ENCODE measurements at regions of chr19 and their contacts with region 1.

Region 1: GRCh38 chr19:41123716-41124294 is 9.6 kb downstream of the CYP2F1 start:
- DNase-seq: no peak
- ATAC-seq: no peak
- H3K4me3 ChIP-seq: no peak overlapping the region
- H3K4me3 Mint-ChIP-seq: no peak overlapping the region
- H3K27ac ChIP-seq: no peak overlapping the region
- H3K27ac Mint-ChIP-seq: peak overlapping the region; percentile 9 to 95 (median 88)
- H3K4me1 ChIP-seq: peaks cover 26 to 31% of the 10 kb centered on the region in 2 donors
- H3K4me1 Mint-ChIP-seq: peaks cover 21 to 49% (median 44%) of the 10 kb centered on the region in 7 donors
- H3K27me3 ChIP-seq: no peaks in the 10 kb centered on the region
- H3K27me3 Mint-ChIP-seq: peaks cover 0 to 14% (median 0%) of the 10 kb centered on the region in 5 donors

Region 2: DNA sequence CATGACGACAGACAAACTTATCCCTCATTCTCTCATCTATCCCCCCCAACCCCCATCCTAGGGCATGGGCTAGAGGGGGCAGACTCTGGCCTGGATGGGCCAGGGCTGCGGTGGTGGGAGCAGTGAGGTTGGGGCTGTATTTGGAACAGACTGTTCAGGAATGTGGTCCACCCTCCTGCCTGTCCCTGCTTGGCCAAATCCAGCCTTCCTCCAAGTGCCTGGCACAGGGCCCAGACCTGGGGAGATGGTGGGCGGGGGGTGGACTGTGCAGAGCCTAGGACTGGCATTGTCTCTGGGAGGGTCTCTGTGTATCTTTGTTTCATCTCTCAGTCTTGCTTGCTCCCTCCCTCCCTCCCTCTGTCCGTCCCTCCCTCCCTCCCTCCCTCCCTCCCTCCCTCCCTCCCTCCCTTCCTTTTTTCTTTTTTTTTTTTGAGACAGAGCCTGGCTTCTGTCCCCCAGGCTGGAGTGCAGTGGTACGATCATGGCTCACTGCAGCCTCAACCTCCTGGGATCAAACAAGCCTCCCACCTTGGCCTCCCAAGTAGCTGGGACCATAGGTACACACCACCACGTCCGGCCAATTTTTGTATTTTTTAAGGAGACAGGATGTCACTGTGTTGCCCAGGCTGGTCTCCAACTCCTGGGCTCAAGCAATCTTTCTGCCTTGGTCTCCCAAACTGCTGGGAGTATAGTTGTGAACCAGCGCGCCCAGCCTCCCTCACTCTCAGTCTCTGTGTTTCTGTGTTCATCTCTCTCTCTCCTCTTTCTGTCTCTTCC is 310.4 kb before region 1 on chr19:
- CTCF ChIA-PET with region 1: no interaction called
- POLR2A ChIA-PET with region 1: no interaction called
- intact Hi-C with region 1: loop called in 1 of 2 experiments (anchors 5 kb)
- DNase-seq: no peak
- ATAC-seq: no peak
- H3K4me3 ChIP-seq: no peak overlapping the region
- H3K4me3 Mint-ChIP-seq: peak overlapping the region in 9 of 10 donors; percentile 9 to 100 (median 91)
- H3K27ac ChIP-seq: no peak overlapping the region
- H3K27ac Mint-ChIP-seq: peak overlapping the region in 5 of 9 donors; percentile 13 to 90 (median 86)
- H3K4me1 ChIP-seq: peaks cover 8 to 20% of the 10 kb centered on the region in 2 donors
- H3K4me1 Mint-ChIP-seq: peaks cover 33 to 55% (median 52%) of the 10 kb centered on the region in 7 donors
- H3K27me3 ChIP-seq: no peaks in the 10 kb centered on the region
- H3K27me3 Mint-ChIP-seq: peaks cover 0 to 42% (median 0%) of the 10 kb centered on the region in 5 donors

Region 3: DNA sequence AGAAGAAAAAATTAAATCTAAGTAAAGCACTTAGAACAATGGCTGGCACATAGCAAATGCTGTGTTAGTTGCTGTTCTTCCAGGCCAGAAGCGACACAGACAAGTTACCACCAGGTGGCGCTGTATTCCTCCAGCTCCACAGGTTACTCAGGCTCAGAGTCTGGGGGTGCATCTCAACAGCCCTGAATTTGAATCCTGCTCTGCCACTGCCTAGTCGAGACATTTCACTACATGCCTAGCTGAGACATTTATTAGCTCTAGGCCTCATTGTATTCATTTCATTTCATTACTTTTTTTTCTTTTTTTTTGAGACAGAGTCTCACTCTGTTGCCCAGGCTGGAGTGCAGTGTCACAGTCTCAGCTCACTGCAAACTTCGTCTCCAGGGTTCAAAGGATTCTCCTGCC is 149.2 kb before region 1 on chr19:
- CTCF ChIA-PET with region 1: interaction called, 5 read pairs
- POLR2A ChIA-PET with region 1: interaction called, 3 read pairs
- intact Hi-C with region 1: loop called (anchors 2 to 5 kb)
- DNase-seq: peak; percentile 54 to 84 (median 76)
- ATAC-seq: peak; percentile 87
- H3K4me3 ChIP-seq: no peak overlapping the region
- H3K4me3 Mint-ChIP-seq: peak overlapping the region in 1 of 10 donors; percentile 45
- H3K27ac ChIP-seq: no peak overlapping the region
- H3K27ac Mint-ChIP-seq: peak overlapping the region in 3 of 9 donors; percentile 53 to 74 (median 63)
- H3K4me1 ChIP-seq: peaks cover 16 to 19% of the 10 kb centered on the region in 2 donors
- H3K4me1 Mint-ChIP-seq: peaks cover 13 to 53% (median 27%) of the 10 kb centered on the region in 7 donors
- H3K27me3 ChIP-seq: no peaks in the 10 kb centered on the region
- H3K27me3 Mint-ChIP-seq: peaks cover 2 to 38% (median 3%) of the 10 kb centered on the region in 5 donors

Region 4: DNA sequence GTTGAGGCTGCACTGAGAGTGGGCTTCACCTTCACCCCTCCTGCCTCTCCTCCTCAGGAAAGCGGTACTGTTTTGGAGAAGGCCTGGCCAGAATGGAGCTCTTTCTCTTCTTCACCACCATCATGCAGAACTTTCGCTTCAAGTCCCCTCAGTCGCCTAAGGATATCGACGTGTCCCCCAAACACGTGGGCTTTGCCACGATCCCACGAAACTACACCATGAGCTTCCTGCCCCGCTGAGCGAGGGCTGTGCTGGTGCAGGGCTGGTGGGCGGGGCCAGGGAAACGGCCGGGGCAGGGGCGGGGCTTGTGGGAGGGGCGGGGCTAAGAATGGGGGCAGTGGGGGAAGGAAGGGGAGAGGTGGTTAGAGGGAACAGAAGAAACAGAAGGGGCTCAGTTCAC is 28.1 kb before region 1 on chr19:
- CTCF ChIA-PET with region 1: no interaction called
- POLR2A ChIA-PET with region 1: no interaction called
- intact Hi-C with region 1: no loop called
- DNase-seq: no peak
- ATAC-seq: no peak
- H3K4me3 ChIP-seq: no peak overlapping the region
- H3K4me3 Mint-ChIP-seq: no peak overlapping the region
- H3K27ac ChIP-seq: no peak overlapping the region
- H3K27ac Mint-ChIP-seq: no peak overlapping the region
- H3K4me1 ChIP-seq: no peaks in the 10 kb centered on the region
- H3K4me1 Mint-ChIP-seq: peaks cover 0 to 8% (median 3%) of the 10 kb centered on the region in 7 donors
- H3K27me3 ChIP-seq: no peaks in the 10 kb centered on the region
- H3K27me3 Mint-ChIP-seq: peaks cover 27 to 54% (median 42%) of the 10 kb centered on the region in 5 donors

Region 5: GRCh38 chr19:41144403-41144802 is 20.6 kb after region 1 on chr19:
- CTCF ChIA-PET with region 1: interaction called, 11 read pairs
- POLR2A ChIA-PET with region 1: no interaction called
- intact Hi-C with region 1: loop called (anchors 1 kb)
- DNase-seq: peak; percentile 68 to 88 (median 84)
- ATAC-seq: peak; percentile 96
- H3K4me3 ChIP-seq: no peak overlapping the region
- H3K4me3 Mint-ChIP-seq: no peak overlapping the region
- H3K27ac ChIP-seq: no peak overlapping the region
- H3K27ac Mint-ChIP-seq: peak overlapping the region in 4 of 9 donors; percentile 44 to 78 (median 58)
- H3K4me1 ChIP-seq: no peaks in the 10 kb centered on the region
- H3K4me1 Mint-ChIP-seq: peaks cover 0 to 3% (median 0%) of the 10 kb centered on the region in 7 donors
- H3K27me3 ChIP-seq: no peaks in the 10 kb centered on the region
- H3K27me3 Mint-ChIP-seq: peaks cover 0 to 29% (median 15%) of the 10 kb centered on the region in 5 donors